Posterior vena cava (tissue), 2 donors: ENCODE measurements at regions of chr6 and their contacts with region 1.

Region 1: GRCh38 chr6:74964871-74965441 is 240.9 kb downstream of the COL12A1 start:
- DNase-seq: no peak

Region 2: GRCh38 chr6:74161380-74161779 is 803.6 kb before region 1 on chr6:
- intact Hi-C with region 1: loop called in 1 of 2 experiments (anchors 5 kb)
- DNase-seq: no peak